Head of caudate nucleus (tissue), 42 donors: ENCODE measurements at regions of chr11 and their contacts with region 1.

Region 1: DNA sequence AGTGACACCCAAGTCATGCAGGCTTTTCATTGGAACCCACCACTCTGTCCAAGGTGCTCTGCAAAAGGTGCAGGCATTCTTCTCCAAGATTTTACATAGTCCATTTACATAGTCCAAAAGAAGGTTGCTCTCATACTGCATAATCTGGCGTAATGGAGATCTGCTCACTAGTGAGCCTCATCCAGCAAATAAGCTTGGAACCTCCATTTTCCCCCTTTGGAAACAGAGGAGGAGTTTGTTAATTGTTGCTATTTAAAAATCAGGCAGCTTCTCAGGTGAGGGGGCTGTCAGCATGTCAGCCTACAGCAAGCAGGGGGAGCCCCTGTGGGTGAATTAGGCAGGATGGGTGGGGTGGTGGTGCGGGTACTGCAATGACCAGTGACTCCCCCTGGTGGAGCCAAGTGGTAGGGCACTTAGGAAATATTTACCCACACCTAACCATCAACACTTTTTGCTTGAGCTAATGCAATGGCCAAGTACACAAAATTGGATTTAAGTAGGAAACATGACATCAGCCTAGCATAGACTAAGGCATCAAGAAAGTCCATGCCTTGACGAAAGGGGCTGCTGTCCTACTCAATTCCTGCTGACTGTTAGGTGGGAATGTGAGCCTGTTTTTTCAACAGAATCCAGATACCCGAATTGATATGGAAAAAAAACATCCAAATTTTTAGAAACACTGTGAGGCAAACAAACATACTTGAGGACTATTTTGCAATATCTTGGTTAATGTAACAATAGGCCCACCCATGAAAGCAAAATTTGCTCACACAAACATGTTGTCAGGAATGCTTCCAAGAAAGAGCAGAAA is 64.5 kb downstream of the AMBRA1 start:
- DNase-seq: peak; percentile 49 to 91 (median 78)

Region 2: GRCh38 chr11:46389450-46390253 is 139.6 kb before region 1 on chr11:
- intact Hi-C with region 1: loop called (anchors 5 kb)
- DNase-seq: peak; percentile 53 to 90 (median 78)

Region 3: GRCh38 chr11:46450846-46451477 is 78.3 kb before region 1 on chr11:
- intact Hi-C with region 1: loop called (anchors 10 kb)
- DNase-seq: no peak